ENCODE measurements at regions of chr3 and their contacts with region 1.

Region 1: DNA sequence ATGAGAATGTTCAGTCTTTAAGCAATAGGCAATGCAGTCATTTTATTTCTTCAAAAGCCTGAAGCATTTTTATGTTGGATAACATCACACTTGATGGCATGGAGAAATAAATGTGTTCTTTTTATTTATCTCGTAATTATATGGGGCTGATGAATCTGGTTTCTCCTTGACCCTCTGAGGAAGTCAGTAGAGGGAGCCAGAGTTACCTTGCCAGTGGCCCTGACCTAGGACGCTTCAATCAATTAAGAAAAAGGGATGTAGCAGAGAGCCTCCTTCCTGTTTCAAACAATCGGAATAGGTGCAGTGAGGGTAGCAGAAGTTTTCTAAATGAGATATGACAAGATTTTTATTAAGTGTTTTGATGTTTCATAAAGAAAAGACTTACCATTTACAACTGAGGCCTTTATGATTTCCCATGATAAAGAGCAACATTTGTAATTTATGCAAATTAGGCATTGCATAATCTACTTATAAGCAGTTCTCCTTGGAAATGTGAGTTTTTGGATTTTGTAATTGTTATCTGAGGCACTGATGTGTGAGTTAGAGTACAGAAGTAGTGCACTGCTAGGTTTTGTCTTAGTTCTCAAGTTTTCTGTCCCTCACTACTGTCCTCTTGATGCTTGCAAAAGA is 129.1 kb downstream of the RAP2B start:
- DNase-seq: peak; percentile 20
- H3K4me3 Mint-ChIP-seq: no peak overlapping the region
- H3K27ac Mint-ChIP-seq: peak overlapping the region; percentile 26
- H3K4me1 Mint-ChIP-seq: peaks cover 40% of the 10 kb centered on the region
- H3K27me3 Mint-ChIP-seq: no peaks in the 10 kb centered on the region

Region 2: DNA sequence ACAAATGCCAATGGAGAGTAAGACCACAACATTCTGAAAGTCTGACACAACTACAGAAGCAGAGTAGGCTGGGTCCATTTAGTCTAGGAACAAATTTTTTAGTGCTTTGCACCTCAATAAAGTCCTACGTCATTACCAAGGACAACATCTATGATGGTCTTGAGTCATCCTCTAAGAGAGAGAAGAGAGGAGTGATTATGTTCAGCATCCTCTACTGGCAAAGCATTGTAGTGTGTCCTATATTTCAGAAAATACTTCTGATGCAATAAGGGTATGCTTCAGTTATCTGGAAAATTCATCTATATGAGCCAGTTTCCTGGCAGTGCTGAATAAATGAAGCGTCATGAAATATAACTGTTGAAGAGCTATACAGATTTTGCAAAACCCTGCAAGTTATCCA is 360.7 kb before region 1 on chr3:
- CTCF ChIA-PET with region 1: no interaction called
- intact Hi-C with region 1: no loop called
- DNase-seq: no peak
- H3K4me3 Mint-ChIP-seq: no peak overlapping the region
- H3K27ac Mint-ChIP-seq: no peak overlapping the region
- H3K4me1 Mint-ChIP-seq: no peaks in the 10 kb centered on the region
- H3K27me3 Mint-ChIP-seq: peaks cover 3% of the 10 kb centered on the region

Region 3: DNA sequence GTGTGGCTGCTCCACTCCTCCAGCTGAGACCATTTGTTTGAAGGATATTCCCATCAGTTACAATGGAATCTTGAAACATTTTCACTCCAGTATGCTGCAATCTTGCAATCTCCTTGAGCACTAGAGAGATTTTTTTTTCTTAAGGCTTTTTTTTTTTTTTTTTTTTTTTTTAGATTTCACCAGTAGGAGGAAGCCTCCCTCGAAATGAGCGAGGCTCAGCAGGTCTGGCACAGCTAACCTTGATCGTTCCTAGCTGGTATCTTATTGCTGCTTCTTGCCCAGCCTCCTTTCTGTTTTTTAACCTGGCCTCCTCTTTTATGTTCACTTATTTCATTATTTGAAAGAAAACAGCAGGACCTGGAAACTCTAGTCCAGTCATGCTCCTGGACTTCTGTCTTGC is 81.0 kb before region 1 on chr3:
- CTCF ChIA-PET with region 1: interaction called, 3 read pairs
- intact Hi-C with region 1: loop called (anchors 1 kb)
- DNase-seq: peak; percentile 16
- H3K4me3 Mint-ChIP-seq: peak overlapping the region; percentile 36
- H3K27ac Mint-ChIP-seq: no peak overlapping the region
- H3K4me1 Mint-ChIP-seq: peaks cover 33% of the 10 kb centered on the region
- H3K27me3 Mint-ChIP-seq: no peaks in the 10 kb centered on the region

Region 4: DNA sequence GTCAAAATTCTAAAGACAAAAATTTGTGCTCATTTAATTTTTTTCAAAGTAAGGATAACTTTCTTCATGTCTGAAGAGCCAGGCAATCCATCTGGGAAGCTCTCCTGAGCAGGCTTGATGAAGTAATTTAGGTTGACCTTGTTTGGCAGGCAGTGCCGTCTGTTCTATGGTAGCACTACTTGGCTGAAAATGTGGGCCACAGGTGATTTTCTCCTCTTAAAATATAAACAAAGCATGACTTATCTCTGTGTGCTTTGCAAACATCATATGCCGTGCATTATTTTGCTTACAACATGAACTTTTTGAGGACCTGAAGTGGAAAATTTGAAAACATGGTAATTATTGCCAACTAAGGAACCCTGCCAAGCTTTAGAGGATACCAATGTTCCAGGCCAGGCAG is 14.0 kb after region 1 on chr3:
- CTCF ChIA-PET with region 1: interaction called, 11 read pairs
- intact Hi-C with region 1: no loop called
- DNase-seq: no peak
- H3K4me3 Mint-ChIP-seq: no peak overlapping the region
- H3K27ac Mint-ChIP-seq: no peak overlapping the region
- H3K4me1 Mint-ChIP-seq: no peaks in the 10 kb centered on the region
- H3K27me3 Mint-ChIP-seq: no peaks in the 10 kb centered on the region

Region 5: DNA sequence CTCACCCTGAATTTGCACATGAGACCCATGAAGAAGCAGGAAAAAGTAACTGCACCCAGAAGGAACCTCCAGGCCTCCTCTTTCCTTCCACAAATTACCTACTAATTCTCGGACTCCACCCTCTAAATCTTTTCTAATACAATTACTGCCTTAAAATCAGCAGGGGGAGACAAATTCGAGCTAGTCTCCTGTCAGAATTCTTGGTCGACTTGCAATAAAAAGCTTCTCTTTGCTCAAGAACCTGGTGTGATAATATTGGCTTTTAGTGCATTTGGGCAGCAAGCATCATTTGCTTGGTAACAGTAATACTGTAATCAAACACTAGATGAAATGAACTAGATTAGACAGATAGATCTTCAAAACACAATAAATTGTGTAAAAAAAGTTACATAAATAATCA is 152.8 kb after region 1 on chr3:
- CTCF ChIA-PET with region 1: no interaction called
- intact Hi-C with region 1: loop called (anchors 5 kb)
- DNase-seq: no peak
- H3K4me3 Mint-ChIP-seq: no peak overlapping the region
- H3K27ac Mint-ChIP-seq: no peak overlapping the region
- H3K4me1 Mint-ChIP-seq: peaks cover 16% of the 10 kb centered on the region
- H3K27me3 Mint-ChIP-seq: no peaks in the 10 kb centered on the region

Region 6: DNA sequence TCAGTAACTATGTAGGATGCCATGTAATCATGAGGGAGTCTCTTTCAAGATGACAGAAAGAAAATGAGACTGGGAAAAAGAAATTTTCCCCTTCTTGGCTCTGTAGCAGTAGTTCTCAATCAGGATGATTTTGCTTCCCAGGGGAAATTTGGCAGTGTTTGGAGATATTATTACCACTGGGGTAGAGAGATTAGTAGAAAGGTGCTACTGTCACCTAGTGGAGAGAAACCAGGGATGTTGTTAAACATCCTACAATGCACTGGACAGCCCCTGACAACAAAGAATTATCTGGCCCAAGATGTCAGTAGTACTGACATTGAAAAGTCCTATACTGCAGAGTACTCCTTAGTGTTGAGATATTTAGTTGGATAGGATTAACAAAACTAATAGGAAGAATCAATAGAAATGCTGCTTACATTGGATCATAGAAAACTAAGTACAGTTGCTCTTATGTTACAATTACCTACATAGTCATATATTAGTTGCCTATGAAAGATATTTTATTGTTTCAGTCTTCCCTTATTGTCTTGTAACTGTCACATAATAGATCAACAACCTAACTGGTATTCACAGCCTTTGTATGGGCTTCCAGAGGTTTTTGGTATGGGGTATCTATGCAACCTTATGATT is 304.1 kb after region 1 on chr3:
- CTCF ChIA-PET with region 1: no interaction called
- intact Hi-C with region 1: loop called (anchors 1 kb)
- DNase-seq: no peak
- H3K4me3 Mint-ChIP-seq: no peak overlapping the region
- H3K27ac Mint-ChIP-seq: no peak overlapping the region
- H3K4me1 Mint-ChIP-seq: peaks cover 4% of the 10 kb centered on the region
- H3K27me3 Mint-ChIP-seq: no peaks in the 10 kb centered on the region